Caco-2 (cell line): ENCODE measurements at regions of chr2 and their contacts with region 1.

Region 1: GRCh38 chr2:198374375-198375082 is 570.1 kb downstream of the PLCL1 start:
- DNase-seq: peak; percentile 39 to 49
- H3K4me3 ChIP-seq: no peak overlapping the region
- H3K4me3 Mint-ChIP-seq: no peak overlapping the region
- H3K27ac Mint-ChIP-seq: no peak overlapping the region
- H3K4me1 ChIP-seq: no peaks in the 10 kb centered on the region
- H3K4me1 Mint-ChIP-seq: peaks cover 7% of the 10 kb centered on the region
- H3K27me3 ChIP-seq: no peaks in the 10 kb centered on the region
- H3K27me3 Mint-ChIP-seq: peaks cover 10% of the 10 kb centered on the region
- CTCF ChIP-seq: peak; percentile 59 to 60

Region 2: GRCh38 chr2:198662905-198663304 is 288.4 kb after region 1 on chr2:
- CTCF ChIA-PET with region 1: interaction called, 3 read pairs
- POLR2A ChIA-PET with region 1: no interaction called
- intact Hi-C with region 1: loop called (anchors 5 kb)
- DNase-seq: no peak
- H3K4me3 ChIP-seq: no peak overlapping the region
- H3K4me3 Mint-ChIP-seq: no peak overlapping the region
- H3K27ac Mint-ChIP-seq: no peak overlapping the region
- H3K4me1 ChIP-seq: no peaks in the 10 kb centered on the region
- H3K4me1 Mint-ChIP-seq: no peaks in the 10 kb centered on the region
- H3K27me3 ChIP-seq: no peaks in the 10 kb centered on the region
- H3K27me3 Mint-ChIP-seq: peaks cover 3% of the 10 kb centered on the region
- CTCF ChIP-seq: no peak

Region 3: DNA sequence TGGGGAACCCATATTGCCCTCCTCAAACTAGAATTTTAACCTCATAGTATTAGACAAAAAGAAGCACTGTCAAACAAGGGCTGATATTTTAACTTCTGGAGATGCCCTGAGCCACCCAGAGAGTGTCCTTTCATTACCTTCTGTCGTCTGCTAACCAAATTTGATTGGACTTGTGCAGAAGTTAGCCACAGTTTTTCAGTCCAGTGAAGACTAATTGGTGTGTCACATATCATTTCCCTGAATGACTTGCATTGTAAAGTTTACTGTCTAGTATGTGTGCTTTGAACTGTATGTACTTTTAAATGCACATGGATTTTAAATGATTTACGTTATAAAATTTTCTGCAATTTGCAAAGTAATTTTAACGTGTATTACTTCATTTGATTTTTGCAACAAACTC is 436.7 kb after region 1 on chr2:
- CTCF ChIA-PET with region 1: no interaction called
- POLR2A ChIA-PET with region 1: no interaction called
- intact Hi-C with region 1: no loop called
- DNase-seq: no peak
- H3K4me3 ChIP-seq: no peak overlapping the region
- H3K4me3 Mint-ChIP-seq: no peak overlapping the region
- H3K27ac Mint-ChIP-seq: no peak overlapping the region
- H3K4me1 ChIP-seq: no peaks in the 10 kb centered on the region
- H3K4me1 Mint-ChIP-seq: no peaks in the 10 kb centered on the region
- H3K27me3 ChIP-seq: no peaks in the 10 kb centered on the region
- H3K27me3 Mint-ChIP-seq: no peaks in the 10 kb centered on the region
- CTCF ChIP-seq: no peak